SK-N-SH (cell line): ENCODE measurements at regions of chr3 and their contacts with region 1.

Region 1: GRCh38 chr3:45929042-45929679 is 14.1 kb upstream of the CXCR6 start:
- DNase-seq: peak; percentile 84
- H3K4me3 ChIP-seq: no peak overlapping the region; a peak in 1 of 4 replicates
- H3K27ac ChIP-seq: no peak overlapping the region
- H3K4me1 ChIP-seq: no peaks in the 10 kb centered on the region; a peak in 1 of 4 replicates
- H3K27me3 ChIP-seq: no peaks in the 10 kb centered on the region
- CTCF ChIP-seq: peak; percentile 78
- EP300 ChIP-seq: no peak
- RAD21 ChIP-seq: peak; percentile 88

Region 2: GRCh38 chr3:45367453-45367871 is 561.7 kb before region 1 on chr3:
- CTCF ChIA-PET with region 1: no interaction called
- POLR2A ChIA-PET with region 1: no interaction called
- DNase-seq: no peak
- H3K4me3 ChIP-seq: no peak overlapping the region
- H3K27ac ChIP-seq: peak overlapping the region in 1 of 2 experiments; percentile 33; a peak in 2 of 4 replicates
- H3K4me1 ChIP-seq: no peaks in the 10 kb centered on the region
- H3K27me3 ChIP-seq: no peaks in the 10 kb centered on the region
- CTCF ChIP-seq: no peak
- EP300 ChIP-seq: no peak
- RAD21 ChIP-seq: no peak

Region 3: GRCh38 chr3:45841757-45842491 is 87.2 kb before region 1 on chr3 and contains the start of gene LZTFL1:
- CTCF ChIA-PET with region 1: interaction called, 17 read pairs
- POLR2A ChIA-PET with region 1: no interaction called
- DNase-seq: peak; percentile 90
- H3K4me3 ChIP-seq: peak within 1 kb of the TSS; percentile 89 to 95
- H3K27ac ChIP-seq: peak within 1 kb of the TSS; percentile 34 to 66; a peak in 3 of 4 replicates
- H3K4me1 ChIP-seq: peaks cover 0 to 10% of the 10 kb centered on the region in 2 experiments; a peak in 2 of 4 replicates
- H3K27me3 ChIP-seq: no peaks in the 10 kb centered on the region; the same call in 1 of the 2 replicates
- CTCF ChIP-seq: no peak
- EP300 ChIP-seq: no peak
- RAD21 ChIP-seq: no peak
- polyA plus RNA-seq, gene LZTFL1: 11.9 and 19.7 TPM in 2 replicates

Region 4: GRCh38 chr3:45907769-45908705 is 21.1 kb before region 1 on chr3:
- CTCF ChIA-PET with region 1: interaction called, 10 read pairs
- POLR2A ChIA-PET with region 1: no interaction called
- DNase-seq: no peak
- H3K4me3 ChIP-seq: no peak overlapping the region
- H3K27ac ChIP-seq: no peak overlapping the region
- H3K4me1 ChIP-seq: peaks cover 0 to 3% of the 10 kb centered on the region in 2 experiments; a peak in 1 of 4 replicates
- H3K27me3 ChIP-seq: no peaks in the 10 kb centered on the region
- CTCF ChIP-seq: no peak
- EP300 ChIP-seq: no peak
- RAD21 ChIP-seq: no peak

Region 5: DNA sequence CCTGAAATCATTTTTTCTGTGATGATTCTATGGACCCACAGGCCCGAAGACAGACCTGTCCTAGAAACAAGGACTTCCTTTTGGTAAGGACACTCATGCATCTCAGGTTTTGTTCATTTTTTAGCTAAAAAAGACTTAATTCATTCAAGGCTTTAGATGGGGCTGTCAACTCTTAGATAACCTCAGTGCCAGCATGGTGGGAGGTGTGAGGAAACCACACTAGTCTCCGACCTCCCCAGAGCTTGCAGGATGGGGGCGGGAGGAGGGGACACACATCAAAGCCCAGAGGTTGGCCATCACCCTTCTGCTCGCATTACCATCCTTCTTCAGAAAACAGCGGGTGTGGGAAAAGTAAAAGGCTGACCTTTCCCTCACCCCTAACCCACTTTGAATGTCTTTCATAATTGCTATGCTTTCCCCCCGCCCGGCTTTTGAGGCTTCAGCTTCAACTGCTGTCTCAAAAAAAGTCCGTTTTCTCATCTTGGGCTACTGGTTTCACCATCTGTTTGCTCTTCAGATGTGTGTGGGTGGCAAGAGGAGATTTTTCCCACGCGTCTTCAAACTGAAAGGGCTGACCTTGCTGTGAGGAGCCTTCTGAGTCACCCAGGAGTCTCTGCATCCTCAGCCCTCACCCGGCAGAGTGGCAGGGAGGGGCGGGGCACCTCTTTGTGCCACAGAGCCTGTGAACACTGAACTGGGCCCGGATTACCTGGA is 13.5 kb before region 1 on chr3:
- CTCF ChIA-PET with region 1: interaction called, 11 read pairs
- POLR2A ChIA-PET with region 1: no interaction called
- DNase-seq: no peak
- H3K4me3 ChIP-seq: no peak overlapping the region
- H3K27ac ChIP-seq: no peak overlapping the region
- H3K4me1 ChIP-seq: peaks cover 0 to 3% of the 10 kb centered on the region in 2 experiments; a peak in 1 of 4 replicates
- H3K27me3 ChIP-seq: no peaks in the 10 kb centered on the region
- CTCF ChIP-seq: no peak
- EP300 ChIP-seq: no peak
- RAD21 ChIP-seq: no peak